CD8-positive, alpha-beta T cell (primary cell): ENCODE measurements at regions of chr5 and their contacts with region 1.

Region 1: GRCh38 chr5:58849921-58850667 is 267.2 kb downstream of the RAB3C start:
- DNase-seq: peak in 2 of 9 experiments; percentile 5 to 29
- ATAC-seq: no peak
- H3K4me3 ChIP-seq: no peak overlapping the region
- H3K4me3 Mint-ChIP-seq: no peak overlapping the region
- H3K27ac ChIP-seq: no peak overlapping the region
- H3K27ac Mint-ChIP-seq: no peak overlapping the region
- H3K4me1 ChIP-seq: no peaks in the 10 kb centered on the region
- H3K4me1 Mint-ChIP-seq: no peaks in the 10 kb centered on the region
- H3K27me3 ChIP-seq: no peaks in the 10 kb centered on the region
- H3K27me3 Mint-ChIP-seq: peaks cover 3% of the 10 kb centered on the region
- CTCF ChIP-seq: peak; percentile 33

Region 2: DNA sequence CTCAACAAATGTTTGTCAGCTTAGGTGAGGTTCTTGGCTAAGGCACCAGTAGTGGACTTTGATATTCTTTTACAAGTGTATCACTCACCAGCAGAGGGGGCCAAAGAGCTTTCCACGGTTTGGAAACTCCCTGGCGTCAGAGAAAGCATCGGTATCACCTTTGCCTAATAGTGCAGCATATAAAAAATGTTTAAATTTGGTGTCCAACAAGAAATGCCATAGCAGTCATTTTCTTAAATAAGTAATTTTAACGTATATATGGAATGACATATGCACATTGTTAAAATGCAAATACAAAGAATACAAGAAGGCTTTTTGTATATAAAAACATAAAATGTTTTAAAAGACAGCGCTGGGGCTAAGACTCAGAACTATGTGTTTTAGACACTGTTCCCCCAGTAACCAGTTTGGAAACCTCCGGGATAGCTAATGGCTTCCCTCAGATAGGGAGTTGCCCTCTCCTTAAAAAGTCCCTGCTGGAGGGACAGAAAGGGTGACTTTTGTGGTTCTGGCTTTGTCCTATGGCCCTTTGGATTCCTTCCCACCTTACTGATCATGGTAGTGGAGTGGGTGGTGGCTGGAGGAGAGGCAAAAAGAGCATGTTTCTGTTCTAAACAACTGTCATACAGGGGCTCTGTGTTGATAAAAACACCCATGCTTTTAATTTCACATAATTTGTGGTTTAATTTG is 1551.7 kb before region 1 on chr5:
- CTCF ChIA-PET with region 1: interaction called, 3 read pairs
- POLR2A ChIA-PET with region 1: no interaction called
- intact Hi-C with region 1: loop called (anchors 2 to 5 kb)
- DNase-seq: peak; percentile 67 to 91 (median 84)
- ATAC-seq: peak; percentile 87
- H3K4me3 ChIP-seq: peak overlapping the region; percentile 7 to 39
- H3K4me3 Mint-ChIP-seq: peak overlapping the region; percentile 77
- H3K27ac ChIP-seq: no peak overlapping the region
- H3K27ac Mint-ChIP-seq: peak overlapping the region; percentile 62
- H3K4me1 ChIP-seq: peaks cover 6% of the 10 kb centered on the region
- H3K4me1 Mint-ChIP-seq: peaks cover 13% of the 10 kb centered on the region
- H3K27me3 ChIP-seq: no peaks in the 10 kb centered on the region
- H3K27me3 Mint-ChIP-seq: no peaks in the 10 kb centered on the region
- CTCF ChIP-seq: peak; percentile 64

Region 3: DNA sequence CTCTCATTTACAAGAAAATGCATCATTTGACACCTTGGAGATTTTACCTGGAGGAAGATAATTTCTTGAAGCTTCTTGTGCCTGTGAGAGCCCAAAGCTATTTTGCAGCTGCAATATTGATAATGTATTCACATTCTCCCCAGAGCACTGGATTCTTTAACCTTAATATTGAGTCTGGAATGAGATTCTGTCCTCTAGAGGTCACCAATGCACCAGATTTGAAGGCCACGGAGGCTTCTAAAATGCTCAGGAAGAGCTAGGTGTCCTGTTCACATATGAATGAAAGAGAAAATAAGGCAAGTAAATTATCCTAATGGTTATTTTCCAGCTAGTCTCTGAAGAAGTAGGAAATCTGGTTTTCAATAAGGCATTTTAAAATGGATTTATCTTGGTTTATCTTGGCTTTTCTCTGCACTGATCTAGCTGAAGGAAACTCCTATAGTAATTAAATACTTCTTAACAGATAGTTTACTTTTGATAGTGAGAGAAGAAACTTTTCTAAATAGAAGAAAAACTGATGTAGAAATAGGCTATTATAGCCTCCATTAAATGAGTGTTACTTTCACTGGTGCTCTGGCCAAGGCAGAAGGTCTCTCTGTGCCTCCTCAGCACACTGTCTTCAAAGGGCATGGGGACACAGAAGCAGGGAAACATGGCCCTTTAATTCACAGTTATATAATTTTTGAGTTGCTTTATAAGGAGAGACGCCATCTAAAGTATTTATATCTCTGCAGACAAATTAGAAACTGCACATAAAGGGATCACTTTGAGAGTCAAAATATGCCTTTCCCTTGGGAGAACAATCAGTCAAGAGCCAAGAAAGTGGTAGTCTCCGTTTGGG is 1070.5 kb before region 1 on chr5:
- CTCF ChIA-PET with region 1: no interaction called
- POLR2A ChIA-PET with region 1: no interaction called
- intact Hi-C with region 1: loop called in 1 of 2 experiments (anchors 5 kb)
- DNase-seq: peak in 3 of 9 experiments; percentile 6 to 44 (median 24)
- ATAC-seq: no peak
- H3K4me3 ChIP-seq: no peak overlapping the region
- H3K4me3 Mint-ChIP-seq: no peak overlapping the region
- H3K27ac ChIP-seq: no peak overlapping the region
- H3K27ac Mint-ChIP-seq: no peak overlapping the region
- H3K4me1 ChIP-seq: no peaks in the 10 kb centered on the region
- H3K4me1 Mint-ChIP-seq: no peaks in the 10 kb centered on the region
- H3K27me3 ChIP-seq: no peaks in the 10 kb centered on the region
- H3K27me3 Mint-ChIP-seq: no peaks in the 10 kb centered on the region
- CTCF ChIP-seq: no peak

Region 4: DNA sequence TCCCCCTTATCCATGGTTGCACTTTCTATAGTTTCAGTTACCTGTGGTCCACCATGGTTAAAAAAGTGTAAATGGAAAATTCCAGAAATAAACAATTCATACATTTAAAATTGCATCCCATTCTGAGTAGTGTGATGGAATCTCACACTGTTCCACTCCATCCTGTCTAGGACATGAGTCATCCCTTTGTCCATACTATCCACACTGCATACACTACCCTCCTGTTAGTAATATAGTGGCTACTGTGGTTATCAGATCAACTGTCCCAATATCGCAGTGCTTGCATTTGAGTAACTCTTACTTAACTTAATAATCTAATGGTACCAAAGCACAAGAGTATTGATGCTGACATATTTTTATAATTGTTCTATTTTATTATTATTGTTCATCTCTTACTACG is 166.5 kb before region 1 on chr5:
- CTCF ChIA-PET with region 1: no interaction called
- POLR2A ChIA-PET with region 1: no interaction called
- intact Hi-C with region 1: no loop called
- DNase-seq: no peak
- ATAC-seq: no peak
- H3K4me3 ChIP-seq: no peak overlapping the region
- H3K4me3 Mint-ChIP-seq: no peak overlapping the region
- H3K27ac ChIP-seq: no peak overlapping the region
- H3K27ac Mint-ChIP-seq: no peak overlapping the region
- H3K4me1 ChIP-seq: no peaks in the 10 kb centered on the region
- H3K4me1 Mint-ChIP-seq: no peaks in the 10 kb centered on the region
- H3K27me3 ChIP-seq: no peaks in the 10 kb centered on the region
- H3K27me3 Mint-ChIP-seq: no peaks in the 10 kb centered on the region
- CTCF ChIP-seq: no peak

Region 5: GRCh38 chr5:58786711-58787303 is 63.3 kb before region 1 on chr5:
- CTCF ChIA-PET with region 1: no interaction called
- POLR2A ChIA-PET with region 1: no interaction called
- intact Hi-C with region 1: no loop called
- DNase-seq: no peak
- ATAC-seq: no peak
- H3K4me3 ChIP-seq: no peak overlapping the region
- H3K4me3 Mint-ChIP-seq: no peak overlapping the region
- H3K27ac ChIP-seq: no peak overlapping the region
- H3K27ac Mint-ChIP-seq: no peak overlapping the region
- H3K4me1 ChIP-seq: no peaks in the 10 kb centered on the region
- H3K4me1 Mint-ChIP-seq: peaks cover 3% of the 10 kb centered on the region
- H3K27me3 ChIP-seq: no peaks in the 10 kb centered on the region
- H3K27me3 Mint-ChIP-seq: peaks cover 10% of the 10 kb centered on the region
- CTCF ChIP-seq: no peak